CD8-positive, alpha-beta T cell (primary cell): ENCODE measurements at regions of chr14 and their contacts with region 1.

Region 1: GRCh38 chr14:59576332-59577294 is at the start of gene CCDC175:
- DNase-seq: peak; percentile 50 to 89 (median 82)
- ATAC-seq: peak; percentile 98
- H3K4me3 ChIP-seq: peak within 1 kb of the TSS; percentile 55 to 58
- H3K4me3 Mint-ChIP-seq: peak within 1 kb of the TSS; percentile 72
- H3K27ac ChIP-seq: no peak within 1 kb of the TSS
- H3K27ac Mint-ChIP-seq: no peak within 1 kb of the TSS
- H3K4me1 ChIP-seq: peaks cover 9% of the 10 kb centered on the region
- H3K4me1 Mint-ChIP-seq: peaks cover 10% of the 10 kb centered on the region
- H3K27me3 ChIP-seq: peaks cover 0 to 4% of the 10 kb centered on the region in 2 experiments
- H3K27me3 Mint-ChIP-seq: peaks cover 27% of the 10 kb centered on the region
- CTCF ChIP-seq: peak; percentile 85
- total RNA-seq, gene CCDC175: not detected

Region 2: GRCh38 chr14:59464486-59465315 is 111.9 kb before region 1 on chr14:
- CTCF ChIA-PET with region 1: no interaction called
- POLR2A ChIA-PET with region 1: no interaction called
- intact Hi-C with region 1: loop called in 1 of 2 experiments (anchors 5 kb)
- DNase-seq: peak; percentile 15 to 77 (median 55)
- ATAC-seq: peak; percentile 69
- H3K4me3 ChIP-seq: peak overlapping the region; percentile 50 to 56
- H3K4me3 Mint-ChIP-seq: peak overlapping the region; percentile 90
- H3K27ac ChIP-seq: peak overlapping the region in 1 of 2 experiments; percentile 42
- H3K27ac Mint-ChIP-seq: peak overlapping the region; percentile 58
- H3K4me1 ChIP-seq: peaks cover 9% of the 10 kb centered on the region
- H3K4me1 Mint-ChIP-seq: peaks cover 11% of the 10 kb centered on the region
- H3K27me3 ChIP-seq: no peaks in the 10 kb centered on the region
- H3K27me3 Mint-ChIP-seq: peaks cover 5% of the 10 kb centered on the region
- CTCF ChIP-seq: no peak

Region 3: DNA sequence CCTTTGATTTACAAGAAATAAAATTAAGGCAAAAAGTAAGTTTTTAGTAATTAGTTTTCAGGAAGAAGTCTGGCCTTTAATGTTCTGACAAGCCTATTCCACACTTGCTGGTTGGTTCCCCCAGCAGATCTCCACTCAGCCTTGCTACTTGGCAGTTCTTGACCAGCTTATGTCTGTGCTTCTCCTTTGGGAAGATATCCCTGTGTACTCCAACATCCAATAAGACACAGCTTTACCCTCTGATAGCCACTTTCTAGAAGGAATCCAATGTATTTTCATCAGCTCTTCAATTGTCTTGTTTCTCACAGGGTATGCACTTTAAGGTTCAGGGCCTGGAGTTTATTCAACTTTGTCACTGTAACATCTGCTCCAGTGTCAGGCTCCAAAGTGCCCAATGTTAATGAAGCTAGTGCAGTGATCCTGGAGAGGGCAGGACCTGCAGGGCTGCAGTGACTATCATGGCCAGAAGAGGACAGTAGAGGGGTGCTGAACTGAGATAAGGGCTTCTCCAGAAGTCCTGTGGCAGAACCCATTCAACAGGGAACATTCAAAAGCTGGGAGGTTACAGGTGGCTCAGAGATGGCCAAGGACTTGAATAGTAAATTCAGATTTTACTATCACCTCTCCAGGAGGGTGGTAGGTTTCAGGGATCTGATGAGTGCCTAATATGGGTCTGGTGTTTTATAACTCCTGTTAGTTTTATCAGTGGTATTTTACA is 69.4 kb before region 1 on chr14:
- CTCF ChIA-PET with region 1: interaction called, 10 read pairs
- POLR2A ChIA-PET with region 1: no interaction called
- intact Hi-C with region 1: loop called (anchors 2 to 5 kb)
- DNase-seq: peak; percentile 1 to 56 (median 44)
- ATAC-seq: peak; percentile 88
- H3K4me3 ChIP-seq: no peak overlapping the region
- H3K4me3 Mint-ChIP-seq: no peak overlapping the region
- H3K27ac ChIP-seq: no peak overlapping the region
- H3K27ac Mint-ChIP-seq: no peak overlapping the region
- H3K4me1 ChIP-seq: peaks cover 4% of the 10 kb centered on the region
- H3K4me1 Mint-ChIP-seq: peaks cover 10% of the 10 kb centered on the region
- H3K27me3 ChIP-seq: no peaks in the 10 kb centered on the region
- H3K27me3 Mint-ChIP-seq: peaks cover 9% of the 10 kb centered on the region
- CTCF ChIP-seq: peak; percentile 76